Activated CD4-positive, alpha-beta T cell treated with anti-CD3 and anti-CD28 coated beads for 36 hours (primary cell): ENCODE measurements at regions of chr17 and their contacts with region 1.

Region 1: GRCh38 chr17:80991645-80992076 is at the start of gene CHMP6:
- DNase-seq: peak; percentile 83
- ATAC-seq: peak; percentile 49
- H3K4me3 Mint-ChIP-seq: peak within 1 kb of the TSS; percentile 69
- H3K27ac Mint-ChIP-seq: peak within 1 kb of the TSS; percentile 74
- H3K4me1 Mint-ChIP-seq: peaks cover 21% of the 10 kb centered on the region
- H3K27me3 Mint-ChIP-seq: peaks cover 3% of the 10 kb centered on the region
- total RNA-seq, gene CHMP6: 15.9 to 19.4 TPM

Region 2: DNA sequence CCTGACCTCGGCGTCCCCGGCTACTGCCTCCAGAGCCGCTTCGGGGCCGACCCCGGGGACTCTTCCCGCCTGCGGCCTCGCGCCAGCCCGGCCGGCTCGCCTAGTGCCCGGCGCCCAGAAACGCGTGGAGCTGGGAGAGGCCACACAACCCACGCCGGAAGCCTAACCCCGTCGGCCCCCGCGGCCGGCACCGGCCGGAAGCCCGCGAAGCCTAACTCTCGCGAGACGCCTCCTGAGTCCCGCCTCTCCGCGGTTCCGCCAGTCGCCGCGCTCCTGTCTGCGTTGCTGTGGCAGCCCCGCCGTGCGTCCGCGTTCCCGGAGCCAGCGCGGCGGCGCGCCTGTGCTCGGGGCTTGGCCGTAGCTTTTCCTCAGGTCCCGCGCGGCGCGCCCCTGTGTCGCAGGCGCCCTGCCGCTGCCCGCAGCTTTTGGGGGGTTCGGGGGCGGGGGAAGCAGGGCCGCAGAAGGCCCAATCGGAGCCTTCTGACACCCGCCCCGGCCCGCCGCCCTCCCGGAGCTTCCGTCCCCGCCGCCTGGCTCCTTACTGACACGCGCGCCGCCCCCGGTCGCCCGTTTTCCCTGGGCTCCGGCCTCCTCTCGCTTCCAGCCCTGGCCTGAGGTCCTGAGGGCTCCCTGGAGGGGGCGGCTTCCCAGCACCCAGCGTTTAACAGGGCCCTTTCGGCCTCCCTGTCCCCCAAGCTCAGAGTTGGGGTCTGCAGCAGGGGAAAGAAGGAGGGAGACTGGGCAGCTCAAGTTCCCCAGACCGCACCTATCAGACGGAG is 536.9 kb before region 1 on chr17:
- CTCF ChIA-PET with region 1: no interaction called
- POLR2A ChIA-PET with region 1: no interaction called
- intact Hi-C with region 1: loop called in 1 of 2 experiments (anchors 1 kb)
- DNase-seq: peak; percentile 98
- ATAC-seq: peak; percentile 93
- H3K4me3 Mint-ChIP-seq: peak overlapping the region; percentile 99
- H3K27ac Mint-ChIP-seq: peak overlapping the region; percentile 94
- H3K4me1 Mint-ChIP-seq: peaks cover 23% of the 10 kb centered on the region
- H3K27me3 Mint-ChIP-seq: peaks cover 13% of the 10 kb centered on the region

Region 3: GRCh38 chr17:81040791-81041337 is 49.2 kb after region 1 on chr17:
- CTCF ChIA-PET with region 1: no interaction called
- POLR2A ChIA-PET with region 1: no interaction called
- intact Hi-C with region 1: no loop called
- DNase-seq: peak; percentile 61
- ATAC-seq: peak; percentile 72
- H3K4me3 Mint-ChIP-seq: no peak overlapping the region
- H3K27ac Mint-ChIP-seq: no peak overlapping the region
- H3K4me1 Mint-ChIP-seq: peaks cover 7% of the 10 kb centered on the region
- H3K27me3 Mint-ChIP-seq: peaks cover 9% of the 10 kb centered on the region

Region 4: DNA sequence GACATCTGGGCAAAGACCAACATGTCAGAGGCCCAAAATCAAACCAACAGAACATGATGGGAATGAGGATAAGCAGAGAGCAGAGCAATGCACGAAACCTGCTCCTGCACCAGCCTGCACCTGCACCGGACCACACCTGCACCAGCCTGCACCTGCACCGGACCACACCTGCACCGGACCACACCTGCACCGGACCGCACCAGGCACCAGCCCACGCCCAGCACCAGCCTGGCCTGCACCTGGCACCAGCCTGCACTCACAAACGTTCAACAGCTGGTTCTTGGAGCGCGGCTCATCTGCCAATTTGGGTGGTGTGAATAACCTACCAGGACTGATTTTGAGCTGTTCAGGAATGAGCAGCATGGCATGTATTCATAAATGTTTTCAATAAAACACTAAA is 212.9 kb after region 1 on chr17:
- CTCF ChIA-PET with region 1: no interaction called
- POLR2A ChIA-PET with region 1: no interaction called
- intact Hi-C with region 1: no loop called
- DNase-seq: no peak
- ATAC-seq: no peak
- H3K4me3 Mint-ChIP-seq: no peak overlapping the region
- H3K27ac Mint-ChIP-seq: no peak overlapping the region
- H3K4me1 Mint-ChIP-seq: no peaks in the 10 kb centered on the region
- H3K27me3 Mint-ChIP-seq: no peaks in the 10 kb centered on the region